MCF 10A (cell line): ENCODE measurements at regions of chr10 and their contacts with region 1.

Region 1: GRCh38 chr10:48656241-48656913 is 28.3 kb upstream of the WDFY4 start:
- DNase-seq: peak; percentile 88
- H3K4me3 Mint-ChIP-seq: peak overlapping the region; percentile 73
- H3K27ac Mint-ChIP-seq: no peak overlapping the region
- H3K4me1 Mint-ChIP-seq: peaks cover 13% of the 10 kb centered on the region
- H3K27me3 Mint-ChIP-seq: peaks cover 58% of the 10 kb centered on the region
- CTCF ChIP-seq: peak; percentile 98

Region 2: DNA sequence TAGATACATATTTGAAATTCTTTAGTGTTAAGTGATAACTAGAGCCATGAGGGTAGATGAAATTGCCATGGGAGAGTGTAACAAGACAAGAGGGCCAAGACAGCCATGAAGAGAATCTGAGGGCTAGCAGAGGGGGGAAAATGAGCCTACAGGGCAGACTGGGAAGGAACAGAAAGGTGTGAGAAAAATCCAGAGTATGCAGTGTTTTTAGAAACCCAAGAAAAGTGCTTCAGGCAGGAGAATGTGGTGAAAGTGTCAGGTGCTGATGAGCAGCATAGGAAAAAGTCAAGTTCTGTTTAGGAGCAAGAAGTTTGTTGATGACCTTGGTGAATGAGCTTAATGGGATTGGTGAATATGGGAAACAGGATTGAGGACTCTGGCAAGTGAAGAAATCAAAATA is 286.8 kb before region 1 on chr10:
- CTCF ChIA-PET with region 1: interaction called, 44 read pairs
- POLR2A ChIA-PET with region 1: interaction called, 4 read pairs
- intact Hi-C with region 1: no loop called
- DNase-seq: no peak
- H3K4me3 Mint-ChIP-seq: no peak overlapping the region
- H3K27ac Mint-ChIP-seq: no peak overlapping the region
- H3K4me1 Mint-ChIP-seq: peaks cover 5% of the 10 kb centered on the region
- H3K27me3 Mint-ChIP-seq: no peaks in the 10 kb centered on the region
- CTCF ChIP-seq: no peak

Region 3: DNA sequence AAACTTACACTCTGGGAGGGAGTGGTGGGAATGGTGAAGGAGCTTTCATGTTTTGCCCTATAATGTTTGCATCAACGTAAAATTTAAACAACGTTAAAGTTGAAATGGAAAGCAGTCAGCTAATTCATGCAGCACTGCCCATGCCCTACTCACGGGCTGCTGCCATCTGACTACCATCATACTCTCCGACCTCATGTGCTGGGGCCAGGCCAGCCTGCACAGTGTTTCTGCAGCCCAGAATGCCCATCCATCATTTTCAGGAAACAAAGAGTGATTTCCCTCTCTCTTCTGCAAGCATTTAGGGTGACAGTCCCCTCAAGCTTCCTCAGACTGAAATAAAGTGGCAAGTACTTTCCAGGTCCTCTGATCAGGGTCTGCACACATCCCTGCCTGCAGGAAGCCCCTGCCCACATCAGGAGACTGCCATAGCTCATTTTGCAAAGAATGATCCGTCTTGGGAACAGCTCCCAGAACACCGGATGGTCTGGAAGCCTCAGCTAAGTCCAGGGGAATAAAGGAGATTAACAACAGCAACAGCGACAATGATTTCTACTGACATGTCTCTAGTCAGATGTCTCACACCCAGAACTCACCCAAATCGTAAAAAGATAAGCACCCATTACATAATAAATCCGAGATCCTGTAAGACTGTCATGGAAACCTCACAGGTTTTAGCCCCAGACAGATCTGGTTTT is 91.8 kb before region 1 on chr10:
- CTCF ChIA-PET with region 1: interaction called, 428 read pairs
- POLR2A ChIA-PET with region 1: interaction called, 3 read pairs
- intact Hi-C with region 1: no loop called
- DNase-seq: no peak
- H3K4me3 Mint-ChIP-seq: no peak overlapping the region
- H3K27ac Mint-ChIP-seq: no peak overlapping the region
- H3K4me1 Mint-ChIP-seq: no peaks in the 10 kb centered on the region
- H3K27me3 Mint-ChIP-seq: no peaks in the 10 kb centered on the region
- CTCF ChIP-seq: no peak

Region 4: DNA sequence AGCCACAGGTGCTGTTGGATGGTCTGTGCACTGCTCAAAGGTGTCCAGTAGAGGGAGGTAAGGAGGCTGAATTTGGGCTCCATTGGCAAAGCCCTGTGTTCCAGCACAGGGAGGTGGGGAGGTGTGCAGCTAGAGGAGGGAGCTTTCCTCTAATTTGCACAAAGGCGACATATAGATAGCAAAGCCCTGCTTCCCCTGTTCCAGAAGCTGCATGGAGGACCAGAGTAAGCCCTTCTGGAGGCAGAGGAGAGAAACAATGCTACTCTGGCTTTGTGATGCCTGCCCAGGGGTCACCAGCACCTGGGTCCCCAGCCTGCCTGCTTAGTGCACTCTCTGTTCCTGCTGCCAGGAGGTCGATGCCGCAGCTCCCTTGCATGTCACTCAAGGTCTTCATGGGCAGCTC is 48.1 kb before region 1 on chr10:
- CTCF ChIA-PET with region 1: interaction called, 87 read pairs
- POLR2A ChIA-PET with region 1: interaction called, 3 read pairs
- intact Hi-C with region 1: loop called (anchors 1 kb)
- DNase-seq: peak; percentile 75
- H3K4me3 Mint-ChIP-seq: no peak overlapping the region
- H3K27ac Mint-ChIP-seq: no peak overlapping the region
- H3K4me1 Mint-ChIP-seq: peaks cover 26% of the 10 kb centered on the region
- H3K27me3 Mint-ChIP-seq: no peaks in the 10 kb centered on the region
- CTCF ChIP-seq: peak; percentile 70

Region 5: DNA sequence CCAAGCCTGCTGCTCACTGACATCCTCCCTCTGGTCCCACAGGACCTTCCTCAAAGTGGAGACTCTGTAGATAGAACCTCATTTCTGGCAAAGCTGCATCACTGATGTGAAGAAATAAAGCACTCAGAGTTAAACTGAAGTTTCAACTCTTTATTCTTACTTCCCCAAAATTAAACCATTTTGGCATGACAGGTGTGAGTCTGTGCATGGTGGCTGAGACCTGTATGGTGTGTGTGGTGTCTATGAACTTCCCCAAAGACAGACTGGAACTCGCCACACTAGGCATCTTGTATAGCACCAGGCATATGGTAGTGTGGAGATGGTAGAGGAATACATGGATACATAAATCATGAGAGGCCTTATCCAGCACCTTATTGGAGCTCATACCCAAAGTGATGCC is 21.7 kb after region 1 on chr10:
- CTCF ChIA-PET with region 1: interaction called, 12 read pairs
- POLR2A ChIA-PET with region 1: interaction called, 4 read pairs
- intact Hi-C with region 1: no loop called
- DNase-seq: no peak
- H3K4me3 Mint-ChIP-seq: no peak overlapping the region
- H3K27ac Mint-ChIP-seq: no peak overlapping the region
- H3K4me1 Mint-ChIP-seq: no peaks in the 10 kb centered on the region
- H3K27me3 Mint-ChIP-seq: peaks cover 19% of the 10 kb centered on the region
- CTCF ChIP-seq: no peak

Region 6: GRCh38 chr10:48788548-48788947 is 132.2 kb after region 1 on chr10:
- CTCF ChIA-PET with region 1: no interaction called
- POLR2A ChIA-PET with region 1: no interaction called
- intact Hi-C with region 1: no loop called
- DNase-seq: no peak
- H3K4me3 Mint-ChIP-seq: no peak overlapping the region
- H3K27ac Mint-ChIP-seq: no peak overlapping the region
- H3K4me1 Mint-ChIP-seq: peaks cover 8% of the 10 kb centered on the region
- H3K27me3 Mint-ChIP-seq: peaks cover 46% of the 10 kb centered on the region
- CTCF ChIP-seq: no peak

Region 7: DNA sequence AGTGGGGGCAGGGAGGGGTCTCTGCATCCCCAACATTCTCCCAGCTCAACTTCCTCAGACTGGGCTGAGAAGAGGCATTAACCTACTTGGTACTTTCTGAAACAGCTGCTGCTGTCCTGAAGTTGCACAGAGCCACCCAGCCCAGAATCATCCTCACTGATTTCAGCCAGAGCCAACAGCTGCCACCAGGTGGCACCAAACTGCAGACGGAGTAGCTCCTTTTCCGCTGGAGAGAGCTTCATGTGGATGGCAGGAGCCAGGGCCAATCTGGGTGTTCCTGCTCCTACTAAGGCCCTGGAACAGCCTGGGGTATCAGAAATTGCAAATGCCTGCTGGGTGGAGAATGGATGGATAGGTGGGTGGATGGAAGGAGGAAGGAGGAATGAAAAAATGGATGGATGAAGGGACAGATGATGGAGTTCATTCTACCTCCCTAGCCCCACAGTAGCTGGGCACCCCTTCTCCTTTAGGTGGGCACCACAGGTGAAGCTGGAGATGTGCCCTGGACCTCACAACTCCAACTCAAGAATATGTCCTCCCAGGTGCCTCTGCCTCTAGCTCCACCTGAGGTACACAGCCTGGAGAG is 751.3 kb after region 1 on chr10:
- CTCF ChIA-PET with region 1: interaction called, 10 read pairs
- POLR2A ChIA-PET with region 1: no interaction called
- intact Hi-C with region 1: loop called (anchors 1 kb)
- DNase-seq: peak; percentile 78
- H3K4me3 Mint-ChIP-seq: no peak overlapping the region
- H3K27ac Mint-ChIP-seq: no peak overlapping the region
- H3K4me1 Mint-ChIP-seq: no peaks in the 10 kb centered on the region
- H3K27me3 Mint-ChIP-seq: peaks cover 61% of the 10 kb centered on the region
- CTCF ChIP-seq: peak; percentile 85